ENCODE measurements at regions of chr14 and their contacts with region 1.

Region 1: GRCh38 chr14:71309753-71310152 is 402.5 kb downstream of the PCNX1 start:
- DNase-seq: no peak
- H3K4me3 ChIP-seq: no peak overlapping the region
- H3K27ac ChIP-seq: no peak overlapping the region
- H3K4me1 ChIP-seq: no peaks in the 10 kb centered on the region
- H3K27me3 ChIP-seq: no peaks in the 10 kb centered on the region
- CTCF ChIP-seq: peak; percentile 14 to 20

Region 2: GRCh38 chr14:71175450-71175849 is 134.3 kb before region 1 on chr14:
- CTCF ChIA-PET with region 1: interaction called, 20 read pairs
- dilution Hi-C with region 1: no loop called
- in situ Hi-C with region 1: loop called in 1 of 2 experiments (anchors 25 kb)
- intact Hi-C with region 1: no loop called
- DNase-seq: peak; percentile 74
- H3K4me3 ChIP-seq: no peak overlapping the region
- H3K27ac ChIP-seq: no peak overlapping the region
- H3K4me1 ChIP-seq: no peaks in the 10 kb centered on the region
- H3K27me3 ChIP-seq: peaks cover 2% of the 10 kb centered on the region
- CTCF ChIP-seq: no peak

Region 3: DNA sequence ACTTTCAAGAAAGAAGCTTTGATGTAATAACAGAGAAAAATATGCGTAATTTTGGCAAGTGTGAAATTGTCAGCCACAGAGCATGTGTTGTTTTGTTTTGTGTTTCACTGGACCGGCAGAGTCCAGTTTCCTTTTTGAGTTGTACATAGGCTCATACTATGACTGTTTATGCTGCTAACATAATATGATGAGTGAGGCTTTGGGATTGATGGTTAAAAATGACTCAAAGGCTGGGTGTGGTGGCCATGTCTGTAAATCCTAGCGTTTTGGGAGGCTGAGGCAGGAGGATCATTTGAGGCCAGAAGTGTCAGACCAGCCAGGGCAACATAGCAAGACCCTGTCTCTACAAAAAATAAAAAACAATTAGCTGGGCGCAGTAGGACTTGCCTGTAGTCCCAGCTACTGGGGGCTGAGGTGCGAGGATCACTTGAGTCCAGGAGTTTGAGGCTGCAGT is 85.4 kb after region 1 on chr14:
- CTCF ChIA-PET with region 1: no interaction called
- dilution Hi-C with region 1: no loop called
- in situ Hi-C with region 1: no loop called
- intact Hi-C with region 1: no loop called
- DNase-seq: peak; percentile 23
- H3K4me3 ChIP-seq: no peak overlapping the region
- H3K27ac ChIP-seq: no peak overlapping the region
- H3K4me1 ChIP-seq: peaks cover 1% of the 10 kb centered on the region
- H3K27me3 ChIP-seq: no peaks in the 10 kb centered on the region
- CTCF ChIP-seq: no peak

Measured in mammary epithelial cell (primary cell).